ENCODE measurements at regions of chr6 and their contacts with region 1.

Region 1: DNA sequence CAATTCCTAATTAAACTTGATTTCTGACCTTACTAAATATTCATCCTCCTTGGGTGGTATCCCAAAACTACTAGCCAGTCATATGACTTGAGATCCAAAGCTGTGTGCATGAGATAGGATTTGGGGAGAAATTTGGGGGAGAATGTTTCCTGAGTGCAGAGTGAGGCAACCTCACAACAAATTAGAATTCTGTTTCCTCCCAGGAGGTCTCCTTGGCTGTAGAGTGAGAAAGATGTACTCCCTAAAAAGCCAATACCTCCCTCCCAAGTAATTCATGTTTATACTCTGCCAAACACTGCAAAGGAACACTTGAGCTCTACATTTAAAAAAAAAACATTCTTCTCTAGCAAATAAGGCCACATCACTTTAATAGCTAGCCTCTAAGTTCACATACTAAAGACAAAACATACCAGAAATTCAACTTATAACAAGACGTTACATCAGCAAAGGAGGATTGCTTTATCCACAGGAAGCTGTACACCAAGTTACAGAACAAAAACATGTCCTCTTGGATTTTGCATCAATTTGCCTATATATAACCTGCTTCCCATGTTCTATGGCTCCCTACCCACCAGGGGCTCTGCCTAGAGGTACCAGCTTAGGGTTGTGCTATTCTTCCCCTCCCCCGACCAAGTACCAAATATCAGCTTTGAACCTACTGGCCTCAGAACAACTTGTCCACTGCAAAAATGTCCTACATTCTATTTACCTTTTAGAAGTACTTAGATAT is 15.4 kb upstream of the TMEM30A start:
- DNase-seq: no peak

Region 2: GRCh38 chr6:74964871-74965441 is 335.0 kb before region 1 on chr6:
- intact Hi-C with region 1: no loop called
- DNase-seq: no peak

Region 3: DNA sequence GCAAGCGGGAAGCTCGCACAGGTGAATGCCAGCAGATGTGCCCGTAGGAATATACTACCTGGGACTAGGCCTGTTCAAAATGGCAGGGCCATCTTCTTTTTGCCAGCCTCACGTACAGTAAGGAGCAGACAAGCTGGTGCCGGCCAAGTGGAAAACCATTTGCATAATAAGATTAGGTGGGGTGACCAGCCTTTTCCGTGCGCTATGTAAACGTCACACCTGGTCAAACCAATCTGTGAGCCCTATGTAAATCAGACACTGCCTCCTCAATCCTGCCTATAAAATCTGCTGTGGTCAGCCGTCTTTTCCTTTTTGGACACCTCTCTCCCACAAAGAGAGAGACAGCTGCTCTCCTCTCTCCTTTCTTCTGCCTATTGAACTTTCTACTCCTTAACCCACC is 45.4 kb after region 1 on chr6:
- intact Hi-C with region 1: loop called in 1 of 2 experiments (anchors 1 kb)
- DNase-seq: no peak

Region 4: DNA sequence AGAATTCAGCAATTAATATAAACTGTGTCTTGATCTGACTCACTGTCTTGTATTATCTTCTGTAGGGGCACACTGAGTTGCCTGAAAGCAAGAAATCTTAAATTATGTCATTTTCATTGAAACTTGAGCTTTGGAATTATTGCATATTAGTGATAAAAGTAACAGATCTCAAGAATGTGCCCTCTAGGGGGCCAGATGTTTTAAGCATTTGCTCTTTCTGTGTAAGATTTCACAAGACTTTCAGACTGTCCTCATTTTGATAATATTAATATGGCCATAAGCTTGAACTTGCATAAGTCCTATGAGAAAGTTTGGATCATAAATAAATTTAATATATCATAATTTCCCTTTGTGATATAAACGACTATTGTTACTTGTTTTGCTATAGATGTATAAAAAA is 393.6 kb after region 1 on chr6:
- intact Hi-C with region 1: no loop called
- DNase-seq: no peak